CD4-positive, alpha-beta memory T cell (primary cell): ENCODE measurements at regions of chr6 and their contacts with region 1.

Region 1: DNA sequence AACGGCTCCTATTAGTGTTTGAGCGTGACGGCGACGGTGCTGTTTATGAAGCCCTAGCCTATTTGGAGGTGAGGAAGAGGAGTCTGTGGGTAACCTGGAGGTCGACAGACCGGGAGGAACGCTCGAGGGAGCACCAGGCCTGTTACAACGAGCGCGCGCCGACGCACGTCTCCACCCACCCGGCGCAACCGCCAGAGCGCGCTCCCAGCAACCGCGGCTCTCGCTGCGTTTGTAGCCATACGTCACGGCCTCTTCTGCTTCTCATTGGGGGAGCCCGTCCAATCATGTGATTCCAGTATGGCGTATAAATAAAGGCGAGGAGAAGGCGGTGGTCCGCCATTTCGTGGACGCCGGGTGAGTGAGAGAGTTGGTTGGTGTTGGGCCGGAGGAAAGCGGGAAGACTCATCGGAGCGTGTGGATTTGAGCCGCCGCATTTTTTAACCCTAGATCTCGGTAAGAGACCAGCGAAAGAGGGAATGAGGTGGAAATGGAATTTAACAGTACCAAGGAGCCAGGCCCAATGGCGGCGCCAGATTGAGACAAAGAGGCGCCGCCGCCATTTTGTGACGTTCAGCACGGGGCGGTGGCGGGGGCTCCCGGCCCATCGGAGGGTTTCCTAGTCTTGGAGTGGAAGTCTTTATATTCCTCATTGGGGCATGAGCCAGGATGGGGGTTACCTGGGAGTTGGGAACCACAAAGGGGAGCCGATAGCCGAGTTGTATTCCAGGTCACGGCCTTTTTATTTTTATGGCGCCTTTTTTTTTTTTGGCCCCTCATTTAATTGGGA is at the start of gene SRSF3:
- DNase-seq: peak; percentile 97 to 98 (median 98)
- H3K4me3 ChIP-seq: peak within 1 kb of the TSS; percentile 89 to 91
- H3K4me3 Mint-ChIP-seq: peak within 1 kb of the TSS; percentile 92 to 100 (median 98)
- H3K27ac ChIP-seq: peak within 1 kb of the TSS; percentile 94
- H3K27ac Mint-ChIP-seq: peak within 1 kb of the TSS; percentile 97 to 100 (median 99)
- H3K4me1 ChIP-seq: peaks cover 46% of the 10 kb centered on the region
- H3K4me1 Mint-ChIP-seq: peaks cover 20 to 58% (median 35%) of the 10 kb centered on the region in 4 donors
- H3K27me3 ChIP-seq: no peaks in the 10 kb centered on the region
- H3K27me3 Mint-ChIP-seq: no peaks in the 10 kb centered on the region
- total RNA-seq, gene SRSF3: 337 to 350 TPM

Region 2: GRCh38 chr6:36442671-36443470 is 151.4 kb before region 1 on chr6 and contains the starts of genes KCTD20 and PXT1:
- CTCF ChIA-PET with region 1: interaction called, 4 read pairs
- POLR2A ChIA-PET with region 1: interaction called, 8 read pairs
- intact Hi-C with region 1: loop called (anchors 1 kb)
- DNase-seq: peak; percentile 83 to 86 (median 85)
- H3K4me3 ChIP-seq: peak within 1 kb of the TSS; percentile 85 to 96
- H3K4me3 Mint-ChIP-seq: peak within 1 kb of the TSS; percentile 92 to 99 (median 97)
- H3K27ac ChIP-seq: peak within 1 kb of the TSS; percentile 92
- H3K27ac Mint-ChIP-seq: peak within 1 kb of the TSS; percentile 87 to 99 (median 99)
- H3K4me1 ChIP-seq: peaks cover 53% of the 10 kb centered on the region
- H3K4me1 Mint-ChIP-seq: peaks cover 27 to 61% (median 42%) of the 10 kb centered on the region in 4 donors
- H3K27me3 ChIP-seq: no peaks in the 10 kb centered on the region
- H3K27me3 Mint-ChIP-seq: no peaks in the 10 kb centered on the region
- total RNA-seq, gene KCTD20: 35.2 to 38.9 TPM
- total RNA-seq, gene PXT1: 0.25 TPM in 1 of 2 experiments, not detected in the other

Region 3: DNA sequence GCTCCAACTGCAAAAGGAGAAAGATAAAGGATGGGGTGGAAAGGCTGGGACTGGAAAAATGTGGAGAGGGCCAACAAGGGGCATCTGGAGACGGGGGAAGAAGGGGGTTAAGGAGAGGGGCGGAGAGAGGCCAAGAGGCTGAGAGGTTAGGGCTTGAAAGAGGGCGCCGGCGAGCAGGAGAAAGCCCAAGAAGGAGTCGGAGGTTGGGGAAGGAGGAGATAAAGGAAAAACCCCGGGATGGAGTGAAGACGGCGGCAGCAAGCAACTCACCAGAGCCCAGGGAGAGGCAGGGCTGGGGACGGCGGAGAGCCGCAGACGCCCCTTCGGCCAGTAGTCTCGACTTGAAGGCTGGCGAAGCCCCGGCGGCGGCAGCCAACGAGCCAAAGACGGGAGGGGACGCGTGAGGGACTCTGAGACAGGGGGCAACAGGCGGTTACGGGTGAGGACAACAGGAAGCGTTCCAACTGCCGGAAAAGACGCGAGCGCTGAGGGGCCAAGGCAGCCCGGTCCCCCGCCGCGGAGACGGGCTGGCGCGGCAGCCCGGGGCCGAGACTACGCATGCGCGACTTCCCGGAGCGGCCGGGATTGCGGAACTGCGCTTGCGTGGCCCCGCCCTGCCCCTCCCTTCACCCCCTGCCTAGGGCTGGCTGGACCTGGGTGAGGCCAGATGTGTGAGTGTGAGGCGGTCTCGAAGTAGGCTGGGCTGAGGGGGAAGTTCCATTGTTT is 47.1 kb before region 1 on chr6 and contains the start of gene STK38:
- CTCF ChIA-PET with region 1: interaction called, 9 read pairs
- POLR2A ChIA-PET with region 1: interaction called, 214 read pairs
- intact Hi-C with region 1: loop called (anchors 1 kb)
- DNase-seq: peak; percentile 85 to 90 (median 87)
- H3K4me3 ChIP-seq: peak within 1 kb of the TSS; percentile 89 to 99
- H3K4me3 Mint-ChIP-seq: peak within 1 kb of the TSS; percentile 94 to 100 (median 100)
- H3K27ac ChIP-seq: peak within 1 kb of the TSS; percentile 92
- H3K27ac Mint-ChIP-seq: peak within 1 kb of the TSS; percentile 94 to 99 (median 98)
- H3K4me1 ChIP-seq: peaks cover 48% of the 10 kb centered on the region
- H3K4me1 Mint-ChIP-seq: peaks cover 23 to 65% (median 39%) of the 10 kb centered on the region in 4 donors
- H3K27me3 ChIP-seq: no peaks in the 10 kb centered on the region
- H3K27me3 Mint-ChIP-seq: no peaks in the 10 kb centered on the region
- total RNA-seq, gene STK38: 186 to 190 TPM

Region 4: GRCh38 chr6:36615018-36615761 is 21.0 kb after region 1 on chr6:
- CTCF ChIA-PET with region 1: interaction called, 23 read pairs
- POLR2A ChIA-PET with region 1: interaction called, 148 read pairs
- intact Hi-C with region 1: no loop called
- DNase-seq: peak; percentile 50 to 67 (median 65)
- H3K4me3 ChIP-seq: no peak overlapping the region
- H3K4me3 Mint-ChIP-seq: no peak overlapping the region
- H3K27ac ChIP-seq: no peak overlapping the region
- H3K27ac Mint-ChIP-seq: peak overlapping the region; percentile 52 to 87 (median 82)
- H3K4me1 ChIP-seq: peaks cover 9% of the 10 kb centered on the region
- H3K4me1 Mint-ChIP-seq: peaks cover 12 to 28% (median 14%) of the 10 kb centered on the region in 4 donors
- H3K27me3 ChIP-seq: no peaks in the 10 kb centered on the region
- H3K27me3 Mint-ChIP-seq: no peaks in the 10 kb centered on the region

Region 5: GRCh38 chr6:36642913-36643817 is 48.9 kb after region 1 on chr6:
- CTCF ChIA-PET with region 1: no interaction called
- POLR2A ChIA-PET with region 1: no interaction called
- intact Hi-C with region 1: no loop called
- DNase-seq: no peak
- H3K4me3 ChIP-seq: no peak overlapping the region
- H3K4me3 Mint-ChIP-seq: no peak overlapping the region
- H3K27ac ChIP-seq: no peak overlapping the region
- H3K27ac Mint-ChIP-seq: peak overlapping the region in 2 of 7 donors; percentile 22 to 60
- H3K4me1 ChIP-seq: no peaks in the 10 kb centered on the region
- H3K4me1 Mint-ChIP-seq: no peaks in the 10 kb centered on the region
- H3K27me3 ChIP-seq: no peaks in the 10 kb centered on the region
- H3K27me3 Mint-ChIP-seq: no peaks in the 10 kb centered on the region

Region 6: DNA sequence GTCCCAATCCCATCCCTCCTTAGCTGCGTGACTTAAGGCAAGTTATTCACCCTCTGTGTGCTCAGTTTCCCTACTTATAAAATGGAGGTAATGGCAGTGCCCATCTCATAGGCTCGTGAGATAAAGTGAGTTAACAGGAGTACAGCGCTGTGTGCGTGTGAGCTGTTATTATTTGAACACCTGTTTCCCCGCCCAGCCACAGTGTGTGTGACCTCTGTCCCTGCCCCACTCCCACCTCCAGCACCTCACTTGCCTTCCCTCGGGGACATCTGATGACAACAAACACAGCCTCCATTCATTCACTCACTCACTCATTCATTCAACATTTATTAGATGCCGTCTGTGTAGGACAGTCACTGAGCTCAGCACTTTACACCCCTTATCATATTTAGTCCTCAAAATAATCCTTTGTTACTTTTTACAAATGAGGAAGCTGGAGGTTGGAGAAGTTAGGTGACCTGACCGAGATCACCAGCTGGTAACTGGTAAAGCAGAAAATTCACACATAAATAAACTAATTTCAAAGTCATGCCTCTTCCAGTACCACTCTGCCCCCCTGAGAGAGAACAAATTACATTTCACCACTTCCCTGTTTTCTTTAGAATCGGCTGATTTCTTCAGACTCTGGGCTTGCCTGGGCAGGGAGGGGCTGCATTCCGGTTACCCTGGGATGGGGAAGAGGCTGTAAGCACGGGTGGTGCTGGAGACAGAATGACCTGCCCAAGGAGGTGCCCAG is 186.4 kb after region 1 on chr6:
- CTCF ChIA-PET with region 1: no interaction called
- POLR2A ChIA-PET with region 1: no interaction called
- intact Hi-C with region 1: no loop called
- DNase-seq: no peak
- H3K4me3 ChIP-seq: no peak overlapping the region
- H3K4me3 Mint-ChIP-seq: no peak overlapping the region
- H3K27ac ChIP-seq: no peak overlapping the region
- H3K27ac Mint-ChIP-seq: peak overlapping the region in 1 of 7 donors; percentile 31
- H3K4me1 ChIP-seq: no peaks in the 10 kb centered on the region
- H3K4me1 Mint-ChIP-seq: peaks cover 0 to 4% (median 3%) of the 10 kb centered on the region in 4 donors
- H3K27me3 ChIP-seq: no peaks in the 10 kb centered on the region
- H3K27me3 Mint-ChIP-seq: no peaks in the 10 kb centered on the region